ENCODE measurements at regions of chr13 and their contacts with region 1.

Region 1: DNA sequence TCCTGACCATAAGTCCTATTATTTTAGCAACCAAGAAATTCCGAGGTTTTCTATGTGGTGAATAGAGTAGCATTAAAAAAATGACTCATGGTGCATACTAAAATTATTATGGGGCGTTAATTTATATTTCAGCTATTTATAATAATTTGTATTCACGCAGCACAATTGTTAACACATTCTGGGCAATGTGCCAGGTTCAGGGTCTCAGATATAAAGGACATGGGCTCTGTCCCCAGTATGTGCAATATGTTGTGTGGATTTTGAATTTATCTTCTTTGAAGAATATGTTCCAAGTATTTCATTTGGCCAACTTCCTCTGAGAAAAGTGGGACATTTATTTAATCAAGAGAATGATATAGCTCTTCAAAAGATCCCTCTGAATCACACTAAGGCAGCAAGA is 1434.7 kb upstream of the PRR20A start:
- DNase-seq: no peak
- H3K4me3 ChIP-seq: no peak overlapping the region
- CTCF ChIP-seq: no peak
- POLR2A ChIP-seq: no peak

Region 2: GRCh38 chr13:55483626-55484158 is 222.3 kb before region 1 on chr13:
- intact Hi-C with region 1: no loop called
- DNase-seq: no peak
- H3K4me3 ChIP-seq: no peak overlapping the region
- CTCF ChIP-seq: no peak
- POLR2A ChIP-seq: no peak

Region 3: GRCh38 chr13:55673910-55674309 is 32.1 kb before region 1 on chr13:
- intact Hi-C with region 1: loop called (anchors 2 kb)
- DNase-seq: no peak
- H3K4me3 ChIP-seq: no peak overlapping the region
- CTCF ChIP-seq: no peak
- POLR2A ChIP-seq: no peak

Region 4: GRCh38 chr13:56216221-56216620 is 510.2 kb after region 1 on chr13:
- intact Hi-C with region 1: no loop called
- DNase-seq: no peak
- H3K4me3 ChIP-seq: no peak overlapping the region
- CTCF ChIP-seq: no peak
- POLR2A ChIP-seq: no peak